ENCODE measurements at regions of chrX and their contacts with region 1.

Region 1: DNA sequence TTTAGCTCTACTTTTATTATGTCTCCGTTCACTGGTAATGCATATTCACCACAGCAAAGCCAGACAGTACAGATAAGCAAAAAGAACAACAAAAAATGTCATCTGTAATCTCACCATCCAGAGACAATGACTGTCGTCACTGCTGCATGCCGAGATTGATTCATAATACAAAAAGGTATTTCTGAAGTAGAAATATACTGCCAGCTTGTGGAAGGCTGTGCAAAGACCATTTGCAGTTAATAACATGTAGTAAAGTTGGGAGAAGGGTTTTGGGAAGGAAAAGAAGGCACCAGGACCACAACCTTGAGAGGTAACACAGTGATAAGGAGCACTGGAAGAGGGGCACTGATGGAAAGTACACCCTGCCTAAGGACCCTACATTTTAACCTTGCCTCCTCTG is 223.0 kb upstream of the ZIC3 start:
- DNase-seq: no peak
- H3K4me3 ChIP-seq: no peak overlapping the region
- CTCF ChIP-seq: no peak
- POLR2A ChIP-seq: no peak

Region 2: GRCh38 chrX:137370656-137371055 is 27.7 kb after region 1 on chrX:
- intact Hi-C with region 1: loop called (anchors 1 kb)
- DNase-seq: no peak
- H3K4me3 ChIP-seq: no peak overlapping the region
- CTCF ChIP-seq: no peak
- POLR2A ChIP-seq: no peak